GM12878 (cell line): ENCODE measurements at regions of chr2 and their contacts with region 1.

Region 1: GRCh38 chr2:228224410-228224809 is 42.9 kb upstream of the SPHKAP start:
- DNase-seq: no peak
- ATAC-seq: no peak
- H3K4me3 ChIP-seq: no peak overlapping the region
- H3K27ac ChIP-seq: no peak overlapping the region
- H3K4me1 ChIP-seq: no peaks in the 10 kb centered on the region
- H3K27me3 ChIP-seq: no peaks in the 10 kb centered on the region
- CTCF ChIP-seq: no peak
- EP300 ChIP-seq: no peak
- POLR2A ChIP-seq: no peak
- RAD21 ChIP-seq: no peak

Region 2: GRCh38 chr2:227528803-227529202 is 695.6 kb before region 1 on chr2:
- CTCF ChIA-PET with region 1: no interaction called
- POLR2A ChIA-PET with region 1: no interaction called
- RAD21 ChIA-PET with region 1: no interaction called
- SMC1A ChIA-PET with region 1: no interaction called
- in situ Hi-C with region 1: no loop called
- intact Hi-C with region 1: no loop called
- DNase-seq: no peak
- ATAC-seq: no peak
- H3K4me3 ChIP-seq: no peak overlapping the region
- H3K27ac ChIP-seq: no peak overlapping the region
- H3K4me1 ChIP-seq: 0 out of 2 replicates have a peak, but pooled peaks cover under 1% of the 10 kb centered on the region
- H3K27me3 ChIP-seq: no peaks in the 10 kb centered on the region
- CTCF ChIP-seq: no peak
- EP300 ChIP-seq: no peak
- POLR2A ChIP-seq: no peak
- RAD21 ChIP-seq: no peak

Region 3: DNA sequence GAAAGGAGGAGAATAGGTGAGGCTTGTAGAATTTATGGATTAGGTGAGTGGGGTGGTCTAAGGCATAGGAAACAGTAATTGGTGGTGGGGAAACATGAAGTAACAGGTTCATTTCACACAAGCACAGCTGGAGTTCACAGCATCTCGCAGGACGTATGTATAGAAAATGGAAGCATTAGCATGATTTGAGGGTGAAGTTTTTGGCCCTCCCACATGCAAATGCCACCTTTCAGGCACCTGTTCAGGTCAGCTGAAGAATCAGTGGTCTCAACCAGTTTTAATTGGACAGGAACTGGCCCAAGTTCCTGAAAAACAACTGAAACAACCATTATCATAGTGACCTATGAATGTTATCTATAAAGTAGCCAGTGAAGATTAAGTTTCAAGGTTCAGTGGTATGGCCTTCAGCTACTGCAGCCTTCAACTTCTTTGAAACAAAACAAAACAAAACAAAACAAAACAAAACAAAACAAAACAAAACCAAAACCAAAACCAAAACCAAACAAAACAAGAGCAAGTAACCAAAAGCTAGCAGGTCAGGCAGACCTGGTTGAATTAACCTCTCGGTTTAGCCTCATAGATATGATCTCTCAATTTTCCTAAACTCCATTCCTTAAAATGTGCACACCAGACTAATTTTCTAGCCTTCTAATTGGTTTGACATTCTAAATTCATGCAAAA is 59.2 kb after region 1 on chr2:
- CTCF ChIA-PET with region 1: no interaction called
- POLR2A ChIA-PET with region 1: no interaction called
- RAD21 ChIA-PET with region 1: no interaction called
- SMC1A ChIA-PET with region 1: no interaction called
- in situ Hi-C with region 1: no loop called
- intact Hi-C with region 1: no loop called
- DNase-seq: no peak
- ATAC-seq: peak; percentile 29; the same call in 2 of the 3 replicates
- H3K4me3 ChIP-seq: no peak overlapping the region
- H3K27ac ChIP-seq: no peak overlapping the region
- H3K4me1 ChIP-seq: no peaks in the 10 kb centered on the region
- H3K27me3 ChIP-seq: no peaks in the 10 kb centered on the region
- CTCF ChIP-seq: no peak
- EP300 ChIP-seq: no peak
- POLR2A ChIP-seq: no peak
- RAD21 ChIP-seq: no peak

Region 4: GRCh38 chr2:228387776-228388175 is 163.4 kb after region 1 on chr2:
- CTCF ChIA-PET with region 1: no interaction called
- POLR2A ChIA-PET with region 1: no interaction called
- RAD21 ChIA-PET with region 1: no interaction called
- SMC1A ChIA-PET with region 1: no interaction called
- in situ Hi-C with region 1: no loop called
- intact Hi-C with region 1: loop called (anchors 10 kb)
- DNase-seq: no peak
- ATAC-seq: no peak
- H3K4me3 ChIP-seq: no peak overlapping the region
- H3K27ac ChIP-seq: no peak overlapping the region
- H3K4me1 ChIP-seq: no peaks in the 10 kb centered on the region
- H3K27me3 ChIP-seq: no peaks in the 10 kb centered on the region
- CTCF ChIP-seq: no peak
- EP300 ChIP-seq: no peak
- POLR2A ChIP-seq: no peak
- RAD21 ChIP-seq: no peak